WTC11 (cell line): ENCODE measurements at regions of chr18 and their contacts with region 1.

Region 1: DNA sequence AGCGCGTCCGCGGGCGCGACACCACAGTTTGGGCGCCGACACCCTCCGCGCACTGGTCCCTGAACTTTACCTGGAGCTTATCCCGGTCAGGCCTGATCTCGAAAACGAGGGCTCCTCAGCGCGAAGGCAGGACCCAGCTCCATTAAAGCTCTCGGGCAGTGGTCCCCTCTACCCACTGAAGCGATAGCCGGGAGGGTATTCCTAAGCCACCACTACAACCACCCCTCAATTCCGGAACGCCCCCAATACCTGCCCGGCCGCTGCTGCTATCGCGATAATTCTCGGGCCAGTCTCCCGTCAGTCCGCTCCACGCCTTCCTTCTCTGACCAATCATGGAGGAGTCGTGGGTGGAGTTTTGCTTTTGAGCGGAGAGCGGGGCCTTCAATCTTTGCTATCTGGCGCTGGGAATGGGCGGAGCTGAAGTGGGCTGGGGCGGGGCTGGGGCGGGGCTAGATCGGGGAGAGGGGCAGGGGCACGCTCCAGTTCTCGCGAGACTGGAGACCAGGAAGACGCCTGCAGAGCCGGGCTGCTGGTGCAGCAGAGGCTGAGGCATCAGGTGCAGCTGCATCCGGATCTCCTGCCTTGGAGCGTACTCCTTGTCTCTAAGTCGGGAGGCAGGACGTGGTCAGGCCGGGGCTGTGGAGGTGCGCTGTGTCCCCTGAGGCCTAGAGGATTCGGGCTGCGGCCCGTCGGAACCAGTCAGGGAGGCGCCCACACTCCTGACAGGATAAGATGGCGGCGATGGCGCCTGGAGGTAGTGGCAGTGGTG is at the starts of genes PIGN and RELCH:
- DNase-seq: peak; percentile 97
- ATAC-seq: peak; percentile 95
- H3K4me3 Mint-ChIP-seq: peak within 1 kb of the TSS; percentile 100
- H3K27ac Mint-ChIP-seq: peak within 1 kb of the TSS; percentile 99
- H3K4me1 Mint-ChIP-seq: peaks cover 36% of the 10 kb centered on the region
- H3K27me3 Mint-ChIP-seq: no peaks in the 10 kb centered on the region
- CTCF ChIP-seq: no peak
- total RNA-seq, gene PIGN: 23.4 to 24.2 TPM (median 23.5 TPM) in 3 replicates
- total RNA-seq, gene RELCH: 23.8 to 30.2 TPM (median 25.3 TPM) in 3 replicates

Region 2: DNA sequence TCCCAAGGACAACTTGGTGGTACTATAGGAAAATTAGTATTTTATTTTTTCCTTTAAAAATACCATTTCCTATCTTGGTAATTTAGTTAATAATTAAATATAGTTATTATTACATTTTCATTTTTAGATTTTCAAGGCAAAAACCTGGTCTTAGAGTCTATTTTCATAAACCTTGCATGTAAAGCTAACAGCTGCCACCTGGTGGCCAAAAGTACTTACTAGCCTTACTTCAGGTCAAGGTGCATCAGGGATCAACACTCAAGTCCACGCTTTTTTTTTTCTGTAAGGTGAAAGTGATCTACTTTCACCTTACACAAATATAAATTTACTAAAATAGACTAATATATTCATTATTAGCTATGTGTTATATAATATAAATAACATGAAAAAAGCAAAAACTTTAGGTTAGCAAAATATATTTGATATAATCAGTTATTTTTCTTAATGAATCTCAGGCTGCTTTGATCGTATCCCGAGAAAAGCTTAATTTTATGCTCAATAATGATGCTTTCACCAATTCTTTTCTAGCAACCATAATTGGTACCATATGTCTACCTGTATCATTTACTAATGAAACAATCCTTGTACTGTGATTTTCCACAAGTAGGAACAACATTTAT is 62.6 kb after region 1 on chr18:
- CTCF ChIA-PET with region 1: interaction called, 12 read pairs
- POLR2A ChIA-PET with region 1: no interaction called
- DNase-seq: peak; percentile 73
- ATAC-seq: peak; percentile 56; the same call in 1 of the 2 replicates
- H3K4me3 Mint-ChIP-seq: no peak overlapping the region
- H3K27ac Mint-ChIP-seq: no peak overlapping the region
- H3K4me1 Mint-ChIP-seq: no peaks in the 10 kb centered on the region
- H3K27me3 Mint-ChIP-seq: no peaks in the 10 kb centered on the region
- CTCF ChIP-seq: peak; percentile 46